ENCODE measurements at regions of chr17 and their contacts with region 1.

Region 1: DNA sequence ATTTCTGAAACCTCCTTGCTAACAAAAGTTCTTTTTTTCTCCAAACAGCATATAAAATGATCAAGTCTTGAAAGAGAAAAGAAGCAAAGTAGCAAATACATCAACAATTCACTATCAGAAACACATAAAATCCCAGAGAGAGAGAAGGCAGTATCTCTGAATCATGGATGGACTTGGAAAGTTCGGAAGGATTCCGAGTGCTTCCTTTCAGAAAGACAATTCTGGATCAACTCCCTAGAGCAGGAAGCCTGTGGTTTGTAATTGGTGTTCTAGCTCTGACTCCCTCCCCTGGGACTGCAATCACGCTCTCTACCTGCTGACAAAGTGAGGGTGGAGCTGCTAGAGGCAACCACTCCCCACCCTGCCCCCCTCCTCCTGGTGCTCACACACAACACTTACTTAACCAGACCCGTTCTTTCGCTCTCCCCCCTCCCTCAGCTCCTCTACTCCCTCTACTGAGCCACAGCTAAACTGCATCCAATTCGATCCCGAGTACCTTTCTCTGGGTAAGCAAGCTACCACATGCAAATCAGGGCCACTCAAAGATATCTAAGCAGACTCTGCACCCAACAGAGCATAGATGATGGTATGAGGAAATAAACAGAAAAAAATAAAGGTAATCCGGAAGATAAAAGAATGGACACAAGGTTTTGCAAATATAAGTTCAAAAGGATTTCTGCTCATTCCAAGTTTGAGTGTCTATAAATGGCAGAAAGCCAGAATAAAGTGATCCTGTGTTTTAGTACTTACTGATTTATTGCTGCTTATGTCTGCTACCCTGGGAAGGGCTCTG is at the start of gene RNF43:
- DNase-seq: peak; percentile 91
- ATAC-seq: peak; percentile 99
- H3K4me3 Mint-ChIP-seq: no peak within 1 kb of the TSS
- H3K27ac Mint-ChIP-seq: no peak within 1 kb of the TSS
- H3K4me1 Mint-ChIP-seq: peaks cover 21% of the 10 kb centered on the region
- H3K27me3 Mint-ChIP-seq: no peaks in the 10 kb centered on the region
- total RNA-seq, gene RNF43: 0.05 TPM in 1 of 2 experiments, not detected in the other

Region 2: DNA sequence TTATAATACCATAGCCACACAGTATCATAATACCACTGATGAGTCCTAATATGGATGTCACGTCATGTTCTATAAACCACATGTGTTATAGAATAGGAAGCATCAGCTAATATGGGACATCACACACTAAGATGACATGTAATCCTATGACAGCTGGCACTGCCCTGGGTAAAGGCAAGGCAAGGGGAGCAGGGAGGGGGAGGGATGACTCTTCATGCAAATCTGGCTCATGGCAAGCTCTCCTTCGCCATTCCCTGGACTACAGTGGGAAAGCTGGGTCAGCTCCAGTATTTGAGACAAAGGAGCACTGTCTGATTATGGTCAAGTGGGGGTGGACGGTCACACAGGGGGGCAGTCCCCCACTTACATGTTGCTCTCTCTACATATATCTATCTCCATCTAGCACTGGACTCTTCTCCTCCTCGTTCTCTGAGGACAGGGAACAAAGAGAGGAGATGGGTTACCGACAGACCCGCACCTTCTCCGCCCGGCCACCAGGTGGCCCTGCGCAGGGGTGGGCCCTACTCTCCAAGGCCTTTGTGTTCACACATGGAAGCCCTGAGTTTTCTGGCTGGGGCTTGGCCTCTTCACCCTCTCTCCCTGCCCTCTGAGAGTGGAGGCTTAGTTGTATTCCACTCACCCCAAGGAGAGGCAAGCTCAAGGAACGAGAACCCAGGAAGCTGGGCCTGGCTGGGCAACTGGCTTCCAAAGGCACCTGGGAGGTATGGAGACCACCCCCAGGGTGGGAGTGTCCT is 113.3 kb before region 1 on chr17:
- CTCF ChIA-PET with region 1: interaction called, 24 read pairs
- POLR2A ChIA-PET with region 1: no interaction called
- DNase-seq: peak; percentile 74
- ATAC-seq: peak; percentile 73
- H3K4me3 Mint-ChIP-seq: no peak overlapping the region
- H3K27ac Mint-ChIP-seq: no peak overlapping the region
- H3K4me1 Mint-ChIP-seq: peaks cover 3% of the 10 kb centered on the region
- H3K27me3 Mint-ChIP-seq: peaks cover 8% of the 10 kb centered on the region

Region 3: GRCh38 chr17:58337600-58338453 is 79.7 kb before region 1 on chr17:
- CTCF ChIA-PET with region 1: interaction called, 12 read pairs
- POLR2A ChIA-PET with region 1: interaction called, 17 read pairs
- DNase-seq: peak; percentile 96
- ATAC-seq: peak; percentile 67
- H3K4me3 Mint-ChIP-seq: peak overlapping the region; percentile 99
- H3K27ac Mint-ChIP-seq: peak overlapping the region; percentile 92
- H3K4me1 Mint-ChIP-seq: peaks cover 39% of the 10 kb centered on the region
- H3K27me3 Mint-ChIP-seq: no peaks in the 10 kb centered on the region

Region 4: GRCh38 chr17:58352014-58352842 is 65.3 kb before region 1 on chr17 and contains the start of gene SUPT4H1:
- CTCF ChIA-PET with region 1: interaction called, 27 read pairs
- POLR2A ChIA-PET with region 1: interaction called, 44 read pairs
- DNase-seq: peak; percentile 94
- ATAC-seq: peak; percentile 91
- H3K4me3 Mint-ChIP-seq: peak within 1 kb of the TSS; percentile 100
- H3K27ac Mint-ChIP-seq: peak within 1 kb of the TSS; percentile 97
- H3K4me1 Mint-ChIP-seq: peaks cover 50% of the 10 kb centered on the region
- H3K27me3 Mint-ChIP-seq: no peaks in the 10 kb centered on the region
- total RNA-seq, gene SUPT4H1: 75.2 to 90.8 TPM

Region 5: GRCh38 chr17:58382108-58382871 is 35.2 kb before region 1 on chr17:
- CTCF ChIA-PET with region 1: interaction called, 33 read pairs
- POLR2A ChIA-PET with region 1: no interaction called
- DNase-seq: no peak
- ATAC-seq: peak; percentile 83
- H3K4me3 Mint-ChIP-seq: peak overlapping the region; percentile 20
- H3K27ac Mint-ChIP-seq: peak overlapping the region; percentile 75
- H3K4me1 Mint-ChIP-seq: peaks cover 56% of the 10 kb centered on the region
- H3K27me3 Mint-ChIP-seq: no peaks in the 10 kb centered on the region